IMR-90 (cell line): ENCODE measurements at regions of chr7 and their contacts with region 1.

Region 1: DNA sequence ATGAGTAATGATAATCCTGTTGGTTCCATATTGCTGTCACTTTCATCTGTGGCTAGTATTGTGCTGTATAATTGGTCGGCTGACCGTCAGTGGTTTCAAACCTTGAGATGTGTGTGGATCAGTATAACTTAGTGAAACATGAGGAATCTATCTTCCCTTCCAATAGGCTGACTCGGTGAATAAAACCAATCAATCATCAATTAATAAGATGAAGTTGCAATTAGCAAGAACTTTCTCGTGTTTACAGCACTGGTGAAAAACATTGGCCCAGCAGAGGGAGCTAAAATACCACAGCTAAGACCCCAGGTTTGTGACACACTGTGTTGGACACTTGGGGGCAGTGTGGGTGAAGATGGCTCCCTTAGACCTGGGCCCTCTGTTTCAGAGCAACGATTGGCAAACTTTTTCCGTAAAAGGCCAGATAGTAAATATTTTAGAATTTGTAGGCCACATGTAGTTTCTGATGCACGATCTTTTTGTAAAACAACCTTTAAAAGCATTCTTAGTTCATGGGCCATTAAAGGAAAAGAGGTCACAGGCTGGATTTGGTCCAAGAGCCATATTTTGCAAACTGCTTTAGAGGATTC is 47.8 kb downstream of the STRA8 start:
- DNase-seq: peak; percentile 87
- ATAC-seq: peak; percentile 100
- H3K4me3 ChIP-seq: no peak overlapping the region
- H3K27ac ChIP-seq: no peak overlapping the region
- H3K4me1 ChIP-seq: no peaks in the 10 kb centered on the region
- H3K27me3 ChIP-seq: no peaks in the 10 kb centered on the region; the same call in 1 of the 2 replicates
- CTCF ChIP-seq: peak; percentile 100
- POLR2A ChIP-seq: 0 out of 2 replicates have a peak, but pooled peaks have one; percentile 47
- RAD21 ChIP-seq: peak; percentile 98

Region 2: DNA sequence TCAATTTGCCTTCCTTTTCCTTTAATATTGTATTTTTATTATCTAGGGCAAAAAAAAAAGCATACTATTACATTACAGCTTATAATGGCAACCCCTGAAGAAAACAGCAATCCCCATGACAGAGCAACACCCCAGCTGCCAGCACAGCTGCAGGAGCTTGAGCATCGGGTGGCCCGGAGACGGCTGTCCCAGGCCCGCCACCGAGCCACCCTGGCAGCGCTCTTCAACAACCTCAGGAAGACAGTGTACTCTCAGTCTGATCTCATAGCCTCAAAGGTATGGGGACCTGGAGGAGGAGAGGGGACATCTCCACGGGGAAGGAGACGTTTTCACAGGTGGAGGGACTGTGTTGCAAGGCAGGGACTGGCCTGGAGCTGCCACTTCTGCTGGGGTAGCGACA is 41.0 kb before region 1 on chr7:
- CTCF ChIA-PET with region 1: no interaction called
- POLR2A ChIA-PET with region 1: no interaction called
- dilution Hi-C with region 1: no loop called
- in situ Hi-C with region 1: no loop called
- intact Hi-C with region 1: no loop called
- DNase-seq: no peak
- ATAC-seq: no peak
- H3K4me3 ChIP-seq: no peak overlapping the region
- H3K27ac ChIP-seq: no peak overlapping the region
- H3K4me1 ChIP-seq: no peaks in the 10 kb centered on the region
- H3K27me3 ChIP-seq: peaks cover 35% of the 10 kb centered on the region
- CTCF ChIP-seq: no peak
- POLR2A ChIP-seq: no peak
- RAD21 ChIP-seq: no peak

Region 3: GRCh38 chr7:135509903-135510602 is 228.6 kb after region 1 on chr7 and contains the start of gene CNOT4:
- CTCF ChIA-PET with region 1: no interaction called
- POLR2A ChIA-PET with region 1: no interaction called
- dilution Hi-C with region 1: no loop called
- in situ Hi-C with region 1: no loop called
- intact Hi-C with region 1: loop called (anchors 1 kb)
- DNase-seq: peak; percentile 92
- ATAC-seq: peak; percentile 97
- H3K4me3 ChIP-seq: peak within 1 kb of the TSS; percentile 92
- H3K27ac ChIP-seq: peak within 1 kb of the TSS; percentile 96
- H3K4me1 ChIP-seq: no peaks in the 10 kb centered on the region
- H3K27me3 ChIP-seq: no peaks in the 10 kb centered on the region
- CTCF ChIP-seq: no peak
- POLR2A ChIP-seq: peak; percentile 93
- RAD21 ChIP-seq: no peak
- total RNA-seq, gene CNOT4: 8.1 and 10.0 TPM in 2 replicates

Region 4: GRCh38 chr7:135558337-135558767 is 276.9 kb after region 1 on chr7:
- CTCF ChIA-PET with region 1: interaction called, 5 read pairs
- POLR2A ChIA-PET with region 1: no interaction called
- dilution Hi-C with region 1: no loop called
- in situ Hi-C with region 1: loop called (anchors 5 kb)
- intact Hi-C with region 1: loop called (anchors 1 kb)
- DNase-seq: peak; percentile 40
- ATAC-seq: peak; percentile 56
- H3K4me3 ChIP-seq: peak overlapping the region; percentile 69
- H3K27ac ChIP-seq: peak overlapping the region; percentile 79
- H3K4me1 ChIP-seq: no peaks in the 10 kb centered on the region
- H3K27me3 ChIP-seq: no peaks in the 10 kb centered on the region
- CTCF ChIP-seq: peak; percentile 59
- POLR2A ChIP-seq: no peak
- RAD21 ChIP-seq: peak; percentile 52

Region 5: DNA sequence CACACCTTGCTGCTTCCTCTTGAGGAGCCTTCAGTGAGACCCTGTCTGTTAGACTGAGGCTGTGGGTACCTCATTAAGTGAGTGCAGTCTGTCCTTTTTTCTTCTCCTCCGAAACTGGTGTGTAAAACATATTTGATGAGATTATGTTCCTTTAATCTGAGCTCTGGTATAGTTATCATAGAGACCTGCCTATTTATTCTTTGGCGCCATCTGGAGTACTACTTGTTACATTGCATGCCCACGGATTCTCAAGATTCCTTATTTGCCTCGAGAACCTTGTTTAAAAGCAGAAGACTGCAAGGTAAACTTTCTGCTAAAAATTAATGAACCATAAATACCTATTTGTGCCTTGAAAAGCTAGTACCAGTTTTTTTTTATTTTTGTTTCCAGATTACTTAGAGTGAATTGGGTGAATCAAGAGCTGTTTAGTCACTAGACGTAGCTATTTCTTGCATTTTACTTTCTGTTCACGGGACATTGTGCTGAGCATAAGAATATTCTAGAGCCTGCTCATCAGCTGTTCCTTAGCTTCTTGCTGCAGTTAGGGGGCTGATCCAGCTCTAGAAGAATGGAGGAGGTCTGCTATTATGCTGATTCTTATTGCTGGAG is 363.9 kb after region 1 on chr7:
- CTCF ChIA-PET with region 1: interaction called, 6 read pairs
- POLR2A ChIA-PET with region 1: no interaction called
- dilution Hi-C with region 1: no loop called
- in situ Hi-C with region 1: loop called (anchors 10 kb)
- intact Hi-C with region 1: loop called (anchors 2 kb)
- DNase-seq: peak; percentile 64
- ATAC-seq: peak; percentile 96
- H3K4me3 ChIP-seq: no peak overlapping the region
- H3K27ac ChIP-seq: no peak overlapping the region
- H3K4me1 ChIP-seq: no peaks in the 10 kb centered on the region
- H3K27me3 ChIP-seq: no peaks in the 10 kb centered on the region
- CTCF ChIP-seq: peak; percentile 79
- POLR2A ChIP-seq: no peak
- RAD21 ChIP-seq: peak; percentile 69

Region 6: GRCh38 chr7:135795846-135796570 is 514.6 kb after region 1 on chr7:
- CTCF ChIA-PET with region 1: no interaction called
- POLR2A ChIA-PET with region 1: no interaction called
- dilution Hi-C with region 1: no loop called
- in situ Hi-C with region 1: no loop called
- intact Hi-C with region 1: loop called (anchors 5 kb)
- DNase-seq: no peak
- ATAC-seq: peak; percentile 55
- H3K4me3 ChIP-seq: no peak overlapping the region
- H3K27ac ChIP-seq: peak overlapping the region; percentile 8; the same call in 1 of the 2 replicates
- H3K4me1 ChIP-seq: peaks cover 6% of the 10 kb centered on the region
- H3K27me3 ChIP-seq: no peaks in the 10 kb centered on the region
- CTCF ChIP-seq: no peak
- POLR2A ChIP-seq: no peak
- RAD21 ChIP-seq: no peak

Region 7: GRCh38 chr7:136405931-136406777 is 1124.7 kb after region 1 on chr7:
- CTCF ChIA-PET with region 1: no interaction called
- POLR2A ChIA-PET with region 1: no interaction called
- dilution Hi-C with region 1: no loop called
- in situ Hi-C with region 1: no loop called
- intact Hi-C with region 1: loop called (anchors 5 kb)
- DNase-seq: peak; percentile 53
- ATAC-seq: peak; percentile 94
- H3K4me3 ChIP-seq: no peak overlapping the region
- H3K27ac ChIP-seq: no peak overlapping the region
- H3K4me1 ChIP-seq: no peaks in the 10 kb centered on the region
- H3K27me3 ChIP-seq: no peaks in the 10 kb centered on the region; the same call in 1 of the 2 replicates
- CTCF ChIP-seq: peak; percentile 68
- POLR2A ChIP-seq: no peak
- RAD21 ChIP-seq: peak; percentile 62